K562 (cell line): ENCODE measurements at regions of chr17 and their contacts with region 1.

Region 1: GRCh38 chr17:37283414-37283961 is 92.3 kb upstream of the C17orf78 start:
- DNase-seq: no peak
- ATAC-seq: no peak
- H3K4me3 ChIP-seq: no peak overlapping the region
- H3K27ac ChIP-seq: no peak overlapping the region
- H3K4me1 ChIP-seq: peaks cover 0 to 20% of the 10 kb centered on the region in 2 experiments; a peak in 3 of 5 replicates
- H3K27me3 ChIP-seq: no peaks in the 10 kb centered on the region
- CTCF ChIP-seq: no peak
- EP300 ChIP-seq: no peak
- POLR2A ChIP-seq: no peak
- RAD21 ChIP-seq: no peak

Region 2: DNA sequence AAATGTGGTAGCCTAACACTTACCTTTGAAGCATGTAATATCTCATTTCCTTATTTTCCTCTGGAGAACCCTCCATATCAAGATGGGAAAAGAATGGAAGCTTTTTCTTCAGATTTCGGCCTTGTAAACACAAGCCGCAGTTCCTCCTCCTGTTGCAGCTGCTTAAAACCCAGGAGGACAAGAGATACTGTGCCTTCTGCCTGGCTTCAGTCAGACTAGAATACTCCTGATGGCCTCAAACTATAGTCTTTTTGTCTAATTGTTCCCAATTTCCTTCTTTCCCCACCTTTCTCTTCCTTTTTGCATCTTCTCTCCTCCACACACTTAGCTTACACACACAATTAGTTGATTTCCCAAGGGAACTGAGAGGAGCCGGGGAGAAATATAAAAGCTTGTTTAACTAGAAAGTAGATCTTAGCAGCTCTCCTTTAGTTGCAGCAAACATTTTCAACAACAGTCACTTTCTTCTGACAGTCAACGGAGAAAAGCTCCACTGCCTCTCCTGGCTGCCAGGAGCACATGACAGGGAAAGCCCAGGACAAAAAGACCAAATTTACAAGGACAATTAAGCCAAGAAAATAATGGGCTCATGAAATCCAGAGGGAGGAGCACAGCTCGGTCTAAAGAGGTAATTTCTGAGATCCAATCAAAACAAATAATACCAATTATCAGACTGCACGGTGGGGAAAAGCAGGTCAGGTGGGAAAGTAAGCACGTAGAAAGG is 15.9 kb after region 1 on chr17:
- CTCF ChIA-PET with region 1: no interaction called
- POLR2A ChIA-PET with region 1: interaction called, 16 read pairs
- in situ Hi-C with region 1: no loop called
- intact Hi-C with region 1: no loop called
- DNase-seq: no peak
- ATAC-seq: no peak
- H3K4me3 ChIP-seq: no peak overlapping the region
- H3K27ac ChIP-seq: peak overlapping the region; percentile 37; the same call in 2 of the 3 replicates
- H3K4me1 ChIP-seq: peaks cover 0 to 11% of the 10 kb centered on the region in 2 experiments; a peak in 4 of 5 replicates
- H3K27me3 ChIP-seq: no peaks in the 10 kb centered on the region
- CTCF ChIP-seq: no peak
- EP300 ChIP-seq: no peak
- POLR2A ChIP-seq: no peak; the same call in 1 of the 2 replicates
- RAD21 ChIP-seq: no peak

Region 3: DNA sequence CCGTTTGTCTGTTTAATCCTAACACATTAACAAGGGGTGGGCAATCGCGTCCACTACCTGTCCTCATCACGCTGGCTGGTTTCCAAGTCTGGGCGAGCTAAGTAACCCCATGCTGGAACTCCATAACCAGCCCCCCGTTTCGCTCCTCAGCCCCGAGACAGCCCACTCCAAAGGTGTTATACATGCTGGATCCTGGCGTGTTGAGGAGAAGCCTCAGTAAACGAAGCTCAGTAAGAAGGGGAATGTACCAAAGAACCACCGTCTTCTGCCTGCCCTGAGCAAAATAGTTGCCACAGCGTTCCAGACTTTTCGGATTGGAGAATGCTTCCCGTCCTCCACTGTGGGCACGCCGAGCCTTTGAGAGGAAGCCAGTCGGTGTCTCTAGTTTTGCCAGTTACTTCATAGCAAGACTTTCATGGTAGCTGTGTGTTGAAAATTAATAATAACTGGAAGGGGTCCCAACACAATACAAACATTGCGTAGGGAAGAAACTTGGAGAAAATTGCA is 76.2 kb after region 1 on chr17:
- CTCF ChIA-PET with region 1: no interaction called
- POLR2A ChIA-PET with region 1: no interaction called
- in situ Hi-C with region 1: no loop called
- intact Hi-C with region 1: loop called (anchors 10 kb)
- DNase-seq: no peak
- ATAC-seq: peak; percentile 1; the same call in 2 of the 3 replicates
- H3K4me3 ChIP-seq: peak overlapping the region; percentile 99
- H3K27ac ChIP-seq: peak overlapping the region; percentile 97
- H3K4me1 ChIP-seq: peaks cover 14 to 18% of the 10 kb centered on the region in 2 experiments
- H3K27me3 ChIP-seq: no peaks in the 10 kb centered on the region
- CTCF ChIP-seq: no peak
- EP300 ChIP-seq: no peak
- POLR2A ChIP-seq: no peak; the same call in none of the 2 replicates
- RAD21 ChIP-seq: no peak